ENCODE measurements at regions of chr14 and their contacts with region 1.

Region 1: GRCh38 chr14:30673071-30673470 is 51.0 kb downstream of the SCFD1 start:
- DNase-seq: no peak
- ATAC-seq: no peak
- H3K4me3 ChIP-seq: no peak overlapping the region
- H3K27ac ChIP-seq: no peak overlapping the region
- H3K4me1 ChIP-seq: no peaks in the 10 kb centered on the region
- H3K27me3 ChIP-seq: no peaks in the 10 kb centered on the region
- CTCF ChIP-seq: no peak
- POLR2A ChIP-seq: no peak
- RAD21 ChIP-seq: no peak

Region 2: DNA sequence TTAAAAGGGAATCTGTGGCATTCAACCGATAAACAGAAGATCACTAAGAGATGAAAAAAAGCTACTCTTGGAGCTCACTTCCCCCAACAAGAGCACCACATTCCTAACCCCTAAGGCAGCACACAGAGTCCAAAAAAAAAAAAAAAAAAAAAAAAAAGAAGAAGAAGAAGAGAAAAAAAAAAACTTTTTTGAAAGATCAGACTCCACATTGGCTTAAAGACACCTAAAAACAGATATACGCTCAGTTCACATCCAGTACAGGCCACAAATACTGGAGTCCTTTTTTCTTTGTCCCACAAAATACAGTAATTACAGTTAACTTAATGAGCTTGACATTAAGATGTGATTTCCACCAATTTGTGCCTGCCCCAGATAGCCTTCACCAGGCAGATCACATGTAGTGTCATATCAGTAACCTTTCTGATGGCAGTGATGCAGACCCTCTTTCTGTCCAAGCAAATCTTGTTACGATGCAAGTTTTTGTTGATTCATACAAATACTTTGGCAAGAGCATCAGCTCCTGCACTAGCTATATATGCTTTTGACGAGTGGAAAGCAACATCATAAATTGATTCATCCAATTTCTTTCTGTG is 221.9 kb after region 1 on chr14:
- CTCF ChIA-PET with region 1: no interaction called
- POLR2A ChIA-PET with region 1: no interaction called
- dilution Hi-C with region 1: no loop called
- in situ Hi-C with region 1: no loop called
- intact Hi-C with region 1: loop called (anchors 10 kb)
- DNase-seq: no peak
- ATAC-seq: 0 out of 2 replicates have a peak, but pooled peaks have one; percentile 60
- H3K4me3 ChIP-seq: no peak overlapping the region
- H3K27ac ChIP-seq: no peak overlapping the region
- H3K4me1 ChIP-seq: no peaks in the 10 kb centered on the region
- H3K27me3 ChIP-seq: no peaks in the 10 kb centered on the region
- CTCF ChIP-seq: no peak
- POLR2A ChIP-seq: no peak
- RAD21 ChIP-seq: no peak

Region 3: DNA sequence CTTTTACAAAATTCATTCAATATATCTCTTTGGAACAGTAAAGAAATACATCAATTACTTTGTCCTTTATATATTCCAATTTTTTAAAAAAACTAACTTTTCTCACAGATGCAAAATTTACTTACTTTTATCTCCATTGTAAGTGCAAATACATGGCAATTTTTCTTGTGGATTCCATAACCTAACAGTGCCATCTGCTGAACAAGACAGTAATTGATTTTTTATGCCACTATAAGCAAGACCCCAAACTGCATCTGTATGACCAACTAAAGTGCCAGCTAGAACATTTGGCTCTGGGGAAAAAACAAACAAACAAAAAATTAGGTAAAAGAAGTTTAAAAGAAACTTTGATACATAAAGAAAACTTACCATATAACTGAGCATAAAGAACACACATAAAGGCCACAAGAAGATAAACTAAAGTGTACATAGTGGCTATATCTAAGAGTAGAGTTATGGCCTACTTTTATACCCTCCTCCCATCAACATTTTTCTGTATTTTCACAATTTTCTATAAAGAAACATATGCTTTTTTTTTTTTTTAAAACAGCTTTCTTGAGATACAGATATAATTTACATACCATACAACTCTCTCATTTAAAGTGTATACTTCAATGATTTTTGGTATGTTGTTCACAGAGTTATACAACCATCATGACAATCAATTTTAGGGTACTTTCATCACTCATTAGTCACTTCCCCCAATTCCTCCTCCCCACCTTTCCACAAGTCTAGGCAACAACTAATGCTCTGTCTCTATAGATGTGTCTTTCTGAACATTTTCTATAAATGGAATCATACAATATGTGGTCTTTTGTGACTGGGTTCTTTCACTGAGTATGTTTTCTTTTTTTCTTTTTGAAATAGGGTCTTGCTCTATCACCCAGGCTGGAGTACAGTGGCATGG is 233.9 kb after region 1 on chr14:
- CTCF ChIA-PET with region 1: no interaction called
- POLR2A ChIA-PET with region 1: no interaction called
- dilution Hi-C with region 1: no loop called
- in situ Hi-C with region 1: no loop called
- intact Hi-C with region 1: no loop called
- DNase-seq: peak; percentile 15
- ATAC-seq: peak; percentile 67
- H3K4me3 ChIP-seq: no peak overlapping the region
- H3K27ac ChIP-seq: no peak overlapping the region
- H3K4me1 ChIP-seq: no peaks in the 10 kb centered on the region
- H3K27me3 ChIP-seq: no peaks in the 10 kb centered on the region
- CTCF ChIP-seq: peak; percentile 39
- POLR2A ChIP-seq: no peak
- RAD21 ChIP-seq: peak; percentile 35; the same call in 1 of the 2 replicates